Adrenal gland (tissue), 19 donors: ENCODE measurements at regions of chr1 and their contacts with region 1.

Region 1: GRCh38 chr1:241979926-241980325 is 19.0 kb downstream of the MAP1LC3C start:
- DNase-seq: no peak
- H3K4me3 ChIP-seq: no peak overlapping the region
- H3K27ac ChIP-seq: no peak overlapping the region
- H3K4me1 ChIP-seq: no peaks in the 10 kb centered on the region
- H3K27me3 ChIP-seq: no peaks in the 10 kb centered on the region
- CTCF ChIP-seq: no peak
- POLR2A ChIP-seq: no peak

Region 2: DNA sequence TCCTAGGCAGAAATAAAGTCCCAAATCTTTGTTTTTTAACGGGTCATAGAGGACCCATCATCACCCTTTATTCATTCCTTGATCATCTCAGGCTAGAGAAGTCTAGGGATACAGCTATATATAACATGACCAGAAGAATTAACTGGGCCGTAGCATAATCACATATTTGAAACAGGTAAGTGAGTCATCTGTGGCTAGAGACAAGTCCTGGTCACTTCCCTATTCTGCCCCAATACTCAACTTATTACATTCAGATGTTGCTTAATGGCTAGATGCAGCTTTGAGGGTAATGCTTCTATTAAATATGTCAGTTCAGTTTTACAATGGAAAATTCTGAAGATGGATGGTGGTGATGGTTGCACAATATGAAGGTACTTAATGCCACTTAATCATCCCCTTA is 84.9 kb before region 1 on chr1:
- intact Hi-C with region 1: loop called in 1 of 2 experiments (anchors 5 kb)
- DNase-seq: no peak
- H3K4me3 ChIP-seq: no peak overlapping the region
- H3K27ac ChIP-seq: no peak overlapping the region
- H3K4me1 ChIP-seq: no peaks in the 10 kb centered on the region
- H3K27me3 ChIP-seq: no peaks in the 10 kb centered on the region
- CTCF ChIP-seq: no peak
- POLR2A ChIP-seq: no peak

Region 3: GRCh38 chr1:241947354-241947753 is 32.6 kb before region 1 on chr1:
- intact Hi-C with region 1: no loop called
- DNase-seq: peak in 6 of 7 donors; percentile 30 to 60 (median 43)
- H3K4me3 ChIP-seq: no peak overlapping the region
- H3K27ac ChIP-seq: no peak overlapping the region
- H3K4me1 ChIP-seq: peaks cover 0 to 3% of the 10 kb centered on the region in 2 donors
- H3K27me3 ChIP-seq: no peaks in the 10 kb centered on the region
- CTCF ChIP-seq: no peak
- POLR2A ChIP-seq: no peak